Endothelial cell of umbilical vein (primary cell): ENCODE measurements at regions of chr3 and their contacts with region 1.

Region 1: GRCh38 chr3:14791343-14791945 is 27.3 kb upstream of the FGD5 start:
- DNase-seq: peak; percentile 71
- H3K4me3 ChIP-seq: no peak overlapping the region
- H3K27ac ChIP-seq: no peak overlapping the region
- H3K4me1 ChIP-seq: no peaks in the 10 kb centered on the region
- H3K27me3 ChIP-seq: no peaks in the 10 kb centered on the region
- CTCF ChIP-seq: peak; percentile 88 to 93
- POLR2A ChIP-seq: no peak

Region 2: DNA sequence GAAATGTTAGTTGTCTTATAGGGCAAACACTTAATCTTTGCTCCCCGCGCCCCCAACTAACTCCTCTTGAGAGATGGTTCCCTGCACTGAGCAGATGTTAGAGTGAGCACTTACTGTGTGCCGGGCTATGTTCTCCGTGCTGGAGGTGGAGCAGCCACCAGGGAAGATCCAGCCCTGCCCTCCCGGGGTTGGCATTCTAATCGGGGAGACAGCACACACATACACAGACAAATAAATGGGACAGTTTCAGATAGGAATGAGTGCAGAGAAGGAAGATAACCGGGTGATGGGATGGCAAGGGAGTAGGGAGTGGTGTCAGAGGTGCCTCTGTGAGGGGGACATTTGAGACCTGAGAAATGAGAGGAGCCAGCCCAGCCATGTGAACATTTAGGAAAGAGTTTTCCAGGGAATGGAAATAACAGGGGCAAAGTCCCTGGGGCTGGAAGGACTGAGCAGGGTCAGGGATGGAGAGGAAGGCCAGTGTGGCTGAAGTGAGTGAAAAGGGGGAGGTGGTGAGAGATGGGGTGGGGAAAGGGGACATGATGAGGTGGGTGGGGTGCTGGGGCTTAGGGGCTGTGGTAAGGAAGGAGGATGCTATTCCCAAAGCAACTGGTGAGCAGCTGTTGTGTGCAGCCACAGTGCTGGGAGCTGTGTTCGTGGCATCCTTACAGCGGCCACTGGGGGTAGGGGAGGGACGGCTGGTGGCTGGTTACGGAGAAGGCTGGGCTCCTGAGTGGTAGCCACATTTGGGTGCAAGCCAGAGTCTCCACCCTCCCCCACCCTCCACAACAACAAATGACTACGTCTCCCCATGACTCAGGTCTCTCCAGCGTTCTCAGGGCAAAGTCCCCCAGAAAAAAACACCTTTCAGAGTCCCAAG is 11.9 kb after region 1 on chr3:
- CTCF ChIA-PET with region 1: interaction called, 10 read pairs
- POLR2A ChIA-PET with region 1: no interaction called
- dilution Hi-C with region 1: no loop called
- intact Hi-C with region 1: no loop called
- DNase-seq: peak; percentile 70
- H3K4me3 ChIP-seq: no peak overlapping the region
- H3K27ac ChIP-seq: peak overlapping the region; percentile 93
- H3K4me1 ChIP-seq: peaks cover 44% of the 10 kb centered on the region
- H3K27me3 ChIP-seq: no peaks in the 10 kb centered on the region
- CTCF ChIP-seq: peak in 1 of 2 donors; percentile 41
- POLR2A ChIP-seq: no peak

Region 3: GRCh38 chr3:14822670-14823390 is 31.4 kb after region 1 on chr3:
- CTCF ChIA-PET with region 1: interaction called, 10 read pairs
- POLR2A ChIA-PET with region 1: interaction called, 3 read pairs
- dilution Hi-C with region 1: no loop called
- intact Hi-C with region 1: loop called (anchors 1 kb)
- DNase-seq: peak; percentile 32
- H3K4me3 ChIP-seq: no peak overlapping the region
- H3K27ac ChIP-seq: peak overlapping the region; percentile 14
- H3K4me1 ChIP-seq: peaks cover 26% of the 10 kb centered on the region
- H3K27me3 ChIP-seq: no peaks in the 10 kb centered on the region
- CTCF ChIP-seq: no peak
- POLR2A ChIP-seq: no peak

Region 4: GRCh38 chr3:14863333-14864100 is 72.1 kb after region 1 on chr3:
- CTCF ChIA-PET with region 1: interaction called, 13 read pairs
- POLR2A ChIA-PET with region 1: no interaction called
- dilution Hi-C with region 1: no loop called
- intact Hi-C with region 1: loop called (anchors 1 kb)
- DNase-seq: peak; percentile 40
- H3K4me3 ChIP-seq: no peak overlapping the region
- H3K27ac ChIP-seq: no peak overlapping the region
- H3K4me1 ChIP-seq: peaks cover 24% of the 10 kb centered on the region
- H3K27me3 ChIP-seq: no peaks in the 10 kb centered on the region
- CTCF ChIP-seq: peak; percentile 53 to 54
- POLR2A ChIP-seq: no peak

Region 5: DNA sequence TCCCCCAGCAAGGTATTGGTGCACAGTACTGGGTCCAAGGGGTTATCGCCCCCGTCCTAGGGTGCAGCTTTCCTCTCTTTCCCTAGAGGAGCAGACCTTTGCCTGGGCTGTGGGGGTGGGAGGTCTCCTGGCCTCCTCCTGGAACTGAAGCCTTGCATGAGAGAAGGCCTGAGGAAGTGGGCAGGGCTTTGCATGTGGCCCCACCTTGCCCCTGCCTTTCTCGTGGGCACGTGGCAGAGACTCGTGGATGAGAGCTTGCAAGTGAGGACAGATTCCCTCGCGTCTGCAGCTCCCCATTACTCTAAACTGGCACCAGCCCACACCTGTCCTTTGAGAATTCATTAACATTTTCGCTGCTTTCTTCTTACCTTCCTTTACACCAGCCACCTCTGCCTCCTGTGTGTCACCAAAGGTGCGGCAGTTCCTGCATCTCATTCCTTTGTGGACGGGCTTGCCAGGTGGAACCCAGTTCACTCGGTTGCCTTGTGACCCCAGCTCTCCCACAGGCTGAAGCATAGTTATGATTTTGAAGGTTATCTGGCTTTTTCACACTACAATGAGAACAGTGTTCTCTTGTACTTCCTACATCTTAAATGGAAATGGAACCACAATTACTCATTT is 115.0 kb after region 1 on chr3:
- CTCF ChIA-PET with region 1: no interaction called
- POLR2A ChIA-PET with region 1: no interaction called
- dilution Hi-C with region 1: no loop called
- intact Hi-C with region 1: no loop called
- DNase-seq: no peak
- H3K4me3 ChIP-seq: no peak overlapping the region
- H3K27ac ChIP-seq: no peak overlapping the region
- H3K4me1 ChIP-seq: no peaks in the 10 kb centered on the region
- H3K27me3 ChIP-seq: no peaks in the 10 kb centered on the region
- CTCF ChIP-seq: no peak
- POLR2A ChIP-seq: no peak

Region 6: GRCh38 chr3:14921078-14921616 is 129.7 kb after region 1 on chr3:
- CTCF ChIA-PET with region 1: interaction called, 60 read pairs
- POLR2A ChIA-PET with region 1: no interaction called
- dilution Hi-C with region 1: no loop called
- intact Hi-C with region 1: loop called (anchors 1 kb)
- DNase-seq: peak; percentile 96
- H3K4me3 ChIP-seq: no peak overlapping the region
- H3K27ac ChIP-seq: no peak overlapping the region
- H3K4me1 ChIP-seq: peaks cover 4% of the 10 kb centered on the region
- H3K27me3 ChIP-seq: no peaks in the 10 kb centered on the region
- CTCF ChIP-seq: peak; percentile 93
- POLR2A ChIP-seq: no peak